Activated T-helper 1 cell treated with anti-CD3 and anti-CD28 coated beads, Interleukin-12 subunit alpha, Interleukin-12 subunit beta, Interleukin-2, Interleukin-4 antibody, amounts not matched to agents 30 ng/mL and 10 ng/mL and 1 ng/mL, durations not matched to agents 14 hours and 24 hours and 36 hours (primary cell): ENCODE measurements at regions of chr20 and their contacts with region 1.

Region 1: GRCh38 chr20:32207626-32208498 is at the starts of genes PLAGL2 and POFUT1:
- DNase-seq: peak; percentile 90
- H3K4me3 Mint-ChIP-seq: peak within 1 kb of the TSS; percentile 100
- H3K27ac Mint-ChIP-seq: peak within 1 kb of the TSS; percentile 93
- H3K4me1 Mint-ChIP-seq: peaks cover 81% of the 10 kb centered on the region
- H3K27me3 Mint-ChIP-seq: no peaks in the 10 kb centered on the region
- total RNA-seq, gene PLAGL2: 123 and 126 TPM in 2 replicates
- total RNA-seq, gene POFUT1: 69.0 and 73.0 TPM in 2 replicates

Region 2: GRCh38 chr20:31879143-31879987 is 328.5 kb before region 1 on chr20:
- intact Hi-C with region 1: loop called (anchors 10 kb)
- DNase-seq: peak; percentile 78
- H3K4me3 Mint-ChIP-seq: peak overlapping the region; percentile 92
- H3K27ac Mint-ChIP-seq: peak overlapping the region; percentile 77
- H3K4me1 Mint-ChIP-seq: peaks cover 24% of the 10 kb centered on the region
- H3K27me3 Mint-ChIP-seq: peaks cover 27% of the 10 kb centered on the region

Region 3: GRCh38 chr20:32109392-32110172 is 98.3 kb before region 1 on chr20 and contains the start of gene TM9SF4:
- intact Hi-C with region 1: loop called (anchors 1 kb)
- DNase-seq: peak; percentile 84
- H3K4me3 Mint-ChIP-seq: peak within 1 kb of the TSS; percentile 92
- H3K27ac Mint-ChIP-seq: peak within 1 kb of the TSS; percentile 99
- H3K4me1 Mint-ChIP-seq: peaks cover 35% of the 10 kb centered on the region
- H3K27me3 Mint-ChIP-seq: peaks cover 4% of the 10 kb centered on the region
- total RNA-seq, gene TM9SF4: 49.5 and 49.6 TPM in 2 replicates

Region 4: DNA sequence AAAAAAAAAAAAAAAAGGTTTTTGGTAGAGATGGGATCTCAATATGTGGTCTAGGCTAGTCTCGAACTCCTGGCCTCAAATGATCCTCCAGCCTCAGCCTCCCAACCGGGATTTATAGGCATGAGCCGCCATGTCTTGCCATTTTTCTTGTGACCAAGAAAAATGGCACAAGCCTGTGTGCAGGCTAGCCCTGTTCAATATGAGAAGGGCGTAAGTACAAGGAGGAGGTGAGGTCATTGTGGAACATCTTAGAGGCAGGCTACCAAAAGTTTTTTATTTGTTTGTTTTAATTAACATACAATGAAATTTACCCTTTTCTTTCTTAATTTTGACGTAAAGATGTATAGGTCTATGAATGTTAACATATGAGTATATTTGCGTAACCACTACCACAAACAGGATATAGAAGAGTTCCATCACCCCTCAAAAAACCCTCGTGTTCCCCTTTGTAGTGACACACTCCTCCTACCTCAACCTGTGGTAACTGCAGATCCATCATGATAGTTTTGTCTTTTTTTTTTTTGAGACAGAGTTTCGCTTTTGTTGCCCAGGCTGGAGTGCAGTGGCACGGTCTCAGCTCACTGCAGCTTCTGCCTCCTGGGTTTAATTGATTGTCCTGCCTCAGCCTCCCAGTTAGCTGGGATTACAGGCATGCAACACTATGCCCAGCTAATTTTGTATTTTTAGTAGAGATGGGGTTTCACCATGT is 41.3 kb after region 1 on chr20:
- intact Hi-C with region 1: loop called (anchors 1 kb)
- DNase-seq: peak; percentile 46
- H3K4me3 Mint-ChIP-seq: peak overlapping the region; percentile 32
- H3K27ac Mint-ChIP-seq: peak overlapping the region; percentile 94
- H3K4me1 Mint-ChIP-seq: peaks cover 58% of the 10 kb centered on the region
- H3K27me3 Mint-ChIP-seq: no peaks in the 10 kb centered on the region

Region 5: DNA sequence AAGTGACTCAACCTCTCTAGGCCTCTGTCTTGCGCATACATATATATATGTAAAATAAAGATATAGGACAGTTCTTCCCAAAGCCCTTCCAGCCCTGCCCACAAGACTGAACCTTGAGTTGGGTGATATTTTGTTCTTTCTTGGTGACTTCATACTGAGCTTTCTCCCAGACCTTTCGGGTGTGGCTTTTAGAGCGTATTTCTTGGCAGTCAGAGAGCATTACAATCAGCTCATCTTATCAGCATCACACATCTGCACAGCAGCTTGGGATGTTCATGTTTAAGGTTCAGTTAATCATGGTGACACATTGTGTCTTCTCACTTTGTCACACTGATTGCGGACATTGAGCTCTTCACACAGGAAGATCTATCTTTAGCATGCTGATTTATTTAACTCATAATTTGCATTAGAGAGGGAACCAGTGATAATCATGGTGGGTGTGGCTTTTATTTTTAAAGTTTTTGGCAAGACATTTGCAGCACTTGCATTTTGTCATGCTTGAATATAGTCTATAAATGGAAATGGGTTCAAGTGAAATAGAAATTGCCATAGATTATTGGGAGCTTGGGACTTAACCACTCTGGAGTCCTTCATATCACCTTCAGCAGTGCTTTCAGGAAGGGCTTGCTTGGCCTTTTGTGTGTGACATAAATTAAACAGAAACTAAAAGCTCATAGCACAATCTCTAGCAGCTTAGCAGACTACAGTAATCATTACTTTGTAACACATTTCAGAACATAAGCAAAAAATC is 77.9 kb after region 1 on chr20:
- intact Hi-C with region 1: loop called (anchors 1 kb)
- DNase-seq: peak; percentile 41
- H3K4me3 Mint-ChIP-seq: peak overlapping the region; percentile 23
- H3K27ac Mint-ChIP-seq: peak overlapping the region; percentile 87
- H3K4me1 Mint-ChIP-seq: peaks cover 75% of the 10 kb centered on the region
- H3K27me3 Mint-ChIP-seq: no peaks in the 10 kb centered on the region

Region 6: DNA sequence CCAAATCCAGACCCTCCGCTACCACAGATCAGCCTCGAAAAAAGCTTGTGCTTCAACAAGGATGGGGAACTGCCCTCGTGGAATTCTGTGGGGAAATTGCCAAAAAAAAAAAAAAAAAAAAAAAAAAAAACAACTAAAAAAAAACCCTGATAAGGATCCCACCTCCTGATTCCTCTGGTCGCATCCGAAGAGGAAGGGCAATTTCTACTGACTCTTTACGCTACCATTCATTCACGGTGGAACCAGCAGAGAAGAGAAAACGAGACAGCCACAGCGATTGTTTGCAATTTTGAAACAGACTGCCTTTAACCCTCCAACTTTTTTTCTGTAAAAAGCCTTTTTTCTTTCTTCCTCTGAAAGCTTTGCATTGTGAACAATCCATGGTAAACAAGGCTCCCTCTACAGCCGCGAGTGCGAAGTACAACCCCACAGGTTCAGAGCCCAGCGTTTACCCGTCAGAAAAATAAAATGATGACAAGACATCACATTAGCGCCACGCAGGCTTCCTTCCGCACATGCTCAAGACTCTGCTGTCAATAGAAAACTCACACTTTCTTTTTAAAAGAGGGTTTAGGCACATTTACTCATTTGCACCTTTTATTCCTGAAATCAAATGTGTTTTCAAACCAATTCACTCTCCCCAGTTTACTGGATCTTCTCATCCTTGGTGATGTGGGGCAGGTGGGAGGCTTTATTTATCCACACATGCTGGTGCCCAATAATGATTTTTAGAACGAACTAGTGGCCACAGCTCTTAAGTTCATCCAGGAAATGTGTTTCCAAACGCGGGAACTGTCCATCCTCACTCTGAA is 277.3 kb after region 1 on chr20:
- intact Hi-C with region 1: loop called (anchors 2 kb)
- DNase-seq: peak; percentile 72
- H3K4me3 Mint-ChIP-seq: peak overlapping the region; percentile 89
- H3K27ac Mint-ChIP-seq: peak overlapping the region; percentile 85
- H3K4me1 Mint-ChIP-seq: peaks cover 21% of the 10 kb centered on the region
- H3K27me3 Mint-ChIP-seq: peaks cover 7% of the 10 kb centered on the region

Region 7: GRCh38 chr20:34083137-34083536 is 1875.3 kb after region 1 on chr20:
- intact Hi-C with region 1: no loop called
- DNase-seq: no peak
- H3K4me3 Mint-ChIP-seq: no peak overlapping the region
- H3K27ac Mint-ChIP-seq: no peak overlapping the region
- H3K4me1 Mint-ChIP-seq: peaks cover 9% of the 10 kb centered on the region
- H3K27me3 Mint-ChIP-seq: no peaks in the 10 kb centered on the region

Region 8: DNA sequence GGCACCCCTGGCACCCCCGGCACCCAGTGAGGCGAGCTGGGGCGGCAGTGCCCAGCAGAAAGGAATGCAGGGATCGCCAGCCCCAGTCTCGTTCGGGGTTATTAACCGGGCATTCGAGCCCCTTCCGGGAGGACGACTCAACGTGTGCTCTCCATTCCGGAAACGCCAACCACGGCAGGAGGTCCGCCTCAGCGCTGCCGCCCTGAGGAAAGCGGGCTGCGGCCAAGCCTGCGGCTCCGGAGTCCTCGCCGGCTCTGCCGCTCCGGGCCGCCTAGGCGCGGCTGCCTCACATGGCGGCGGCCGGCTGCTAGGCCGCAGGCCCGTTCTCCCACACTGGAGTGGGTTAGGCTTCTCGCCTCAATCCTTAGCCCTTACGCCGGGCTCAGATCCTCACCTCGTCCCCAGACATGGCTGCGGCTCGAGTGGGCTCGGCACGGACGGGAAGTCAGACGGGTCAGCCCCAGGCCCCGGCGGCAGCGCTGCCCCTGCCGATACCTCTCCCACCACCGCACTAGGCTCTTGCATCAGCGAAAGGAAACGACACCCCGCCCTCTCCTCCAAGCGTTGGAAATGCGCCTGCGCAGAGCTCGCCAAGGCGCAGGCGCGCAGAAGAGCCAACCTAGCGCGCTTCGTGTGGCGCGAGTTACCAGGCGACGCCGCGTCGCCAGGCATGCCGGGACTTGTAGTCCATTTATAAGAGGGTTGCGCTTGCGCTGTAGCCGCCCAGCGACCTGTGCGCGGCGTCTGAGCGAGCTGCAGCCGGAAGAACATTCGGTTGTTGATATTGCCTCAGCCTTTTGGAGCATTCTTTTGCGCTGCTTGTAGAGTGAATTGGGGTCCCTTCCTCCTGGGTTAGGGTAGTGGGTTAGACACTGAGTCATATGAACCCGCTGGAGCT is 1904.1 kb after region 1 on chr20 and contains the start of gene EIF2S2:
- intact Hi-C with region 1: loop called (anchors 5 kb)
- DNase-seq: peak; percentile 96
- H3K4me3 Mint-ChIP-seq: peak within 1 kb of the TSS; percentile 88
- H3K27ac Mint-ChIP-seq: peak within 1 kb of the TSS; percentile 98
- H3K4me1 Mint-ChIP-seq: peaks cover 46% of the 10 kb centered on the region
- H3K27me3 Mint-ChIP-seq: peaks cover 1% of the 10 kb centered on the region
- total RNA-seq, gene EIF2S2: 99.8 and 105 TPM in 2 replicates